PC-9 (cell line): ENCODE measurements at regions of chr6 and their contacts with region 1.

Region 1: DNA sequence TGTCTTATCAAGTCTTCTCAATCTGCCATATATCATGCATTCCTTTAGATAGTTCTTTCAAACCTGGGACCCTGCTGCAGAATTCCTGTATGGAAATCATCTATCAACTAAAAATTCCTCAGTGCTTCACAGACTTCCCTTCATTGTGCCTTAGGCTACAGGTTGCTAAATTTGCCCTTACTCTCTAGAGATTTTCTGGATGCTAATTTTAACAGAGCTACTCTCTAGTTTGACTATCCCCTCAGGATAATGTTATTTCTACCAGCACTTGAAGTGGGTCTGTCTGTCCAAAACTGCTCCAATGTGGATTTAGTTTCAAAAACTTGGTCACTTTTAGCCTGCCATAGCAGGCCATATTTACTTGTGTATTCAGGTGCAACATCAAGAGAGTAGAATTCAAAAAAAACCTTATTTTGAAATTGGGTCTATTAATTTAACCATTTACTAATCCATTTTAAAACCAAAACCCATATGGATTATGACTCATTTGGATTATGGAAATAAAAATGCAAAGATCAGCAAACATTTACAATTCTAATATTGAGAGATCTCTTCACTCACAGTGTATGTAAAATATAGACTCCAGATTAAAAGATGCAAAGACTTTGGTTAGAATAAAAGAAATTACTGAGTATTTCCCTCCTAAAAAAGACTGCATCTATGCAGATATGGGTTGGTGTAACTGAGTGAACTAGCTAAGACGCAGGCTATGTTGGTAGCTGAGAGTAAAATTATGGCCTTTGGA is 13.9 kb upstream of the COX7A2 start:
- DNase-seq: no peak
- H3K4me3 ChIP-seq: no peak overlapping the region
- H3K27ac ChIP-seq: no peak overlapping the region
- H3K4me1 ChIP-seq: no peaks in the 10 kb centered on the region
- H3K27me3 ChIP-seq: no peaks in the 10 kb centered on the region
- CTCF ChIP-seq: no peak

Region 2: GRCh38 chr6:75296811-75297779 is 39.6 kb after region 1 on chr6:
- CTCF ChIA-PET with region 1: no interaction called
- POLR2A ChIA-PET with region 1: no interaction called
- intact Hi-C with region 1: loop called (anchors 1 kb)
- DNase-seq: peak in 1 of 2 experiments; percentile 48
- H3K4me3 ChIP-seq: no peak overlapping the region
- H3K27ac ChIP-seq: no peak overlapping the region
- H3K4me1 ChIP-seq: no peaks in the 10 kb centered on the region; the same call in 1 of the 2 replicates
- H3K27me3 ChIP-seq: no peaks in the 10 kb centered on the region
- CTCF ChIP-seq: peak; percentile 89